ENCODE measurements at regions of chr15 and their contacts with region 1.

Region 1: GRCh38 chr15:32888221-32888761 is 170.5 kb downstream of the GREM1 start:
- DNase-seq: peak; percentile 95
- H3K4me3 ChIP-seq: no peak overlapping the region
- H3K27me3 ChIP-seq: no peaks in the 10 kb centered on the region
- CTCF ChIP-seq: no peak

Region 2: GRCh38 chr15:32743411-32744140 is 144.7 kb before region 1 on chr15:
- CTCF ChIA-PET with region 1: no interaction called
- POLR2A ChIA-PET with region 1: no interaction called
- DNase-seq: no peak
- H3K4me3 ChIP-seq: no peak overlapping the region
- H3K27me3 ChIP-seq: no peaks in the 10 kb centered on the region
- CTCF ChIP-seq: no peak

Region 3: GRCh38 chr15:32802286-32802936 is 85.9 kb before region 1 on chr15:
- CTCF ChIA-PET with region 1: no interaction called
- POLR2A ChIA-PET with region 1: no interaction called
- DNase-seq: peak; percentile 61
- H3K4me3 ChIP-seq: no peak overlapping the region
- H3K27me3 ChIP-seq: no peaks in the 10 kb centered on the region
- CTCF ChIP-seq: no peak

Region 4: DNA sequence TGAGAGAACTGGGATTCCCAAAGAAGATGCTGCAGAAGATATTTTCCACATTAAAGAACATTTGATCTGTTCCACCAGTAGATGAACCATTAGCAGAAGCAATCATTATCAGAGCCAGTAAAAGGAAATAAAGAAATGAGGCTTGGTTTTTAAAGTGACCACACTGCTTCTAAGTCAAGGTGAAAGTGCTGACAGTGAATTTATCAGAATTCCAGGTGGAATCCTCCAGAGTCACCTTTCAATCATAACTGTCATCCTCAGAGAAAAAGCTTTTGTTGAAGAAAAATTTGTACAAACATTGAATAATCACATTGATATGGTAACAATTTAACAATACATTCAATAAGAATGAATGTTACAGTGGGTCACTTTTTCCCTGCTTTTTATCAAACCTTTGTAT is 70.7 kb before region 1 on chr15:
- CTCF ChIA-PET with region 1: no interaction called
- POLR2A ChIA-PET with region 1: no interaction called
- DNase-seq: no peak
- H3K4me3 ChIP-seq: no peak overlapping the region
- H3K27me3 ChIP-seq: no peaks in the 10 kb centered on the region
- CTCF ChIP-seq: no peak

Region 5: DNA sequence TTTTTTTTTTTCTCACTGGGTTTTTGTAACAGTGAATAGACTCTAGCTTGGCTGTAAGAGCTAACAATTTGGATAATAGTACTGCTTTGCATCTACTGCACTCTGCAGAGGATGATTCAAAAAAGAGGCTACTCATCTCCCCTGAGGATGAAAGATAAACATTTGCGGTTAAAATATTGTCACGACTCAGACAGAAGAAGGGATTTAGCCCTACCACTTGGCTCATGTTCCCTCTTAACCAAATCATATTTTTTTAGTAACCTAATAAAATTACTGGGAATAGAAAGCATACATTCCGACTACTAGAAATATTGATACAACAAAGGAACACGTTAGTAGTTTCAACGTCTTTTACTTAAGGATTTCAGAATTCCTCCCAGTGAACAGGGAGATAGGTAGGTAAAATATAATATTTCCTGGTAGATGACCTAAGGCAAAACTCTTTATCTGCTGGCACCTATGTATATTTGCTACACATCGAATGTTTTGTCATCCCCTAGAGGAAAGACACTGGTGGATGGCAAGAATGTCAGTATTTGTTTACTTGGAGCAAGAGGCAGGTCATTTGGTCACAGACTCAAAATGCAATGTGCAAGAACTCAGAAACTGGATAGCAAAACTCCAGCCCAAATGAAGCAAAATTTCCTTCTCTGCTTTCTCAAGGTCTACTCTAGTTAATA is 59.6 kb before region 1 on chr15:
- CTCF ChIA-PET with region 1: no interaction called
- POLR2A ChIA-PET with region 1: interaction called, 21 read pairs
- DNase-seq: peak; percentile 80
- H3K4me3 ChIP-seq: no peak overlapping the region
- H3K27me3 ChIP-seq: no peaks in the 10 kb centered on the region
- CTCF ChIP-seq: no peak

Region 6: DNA sequence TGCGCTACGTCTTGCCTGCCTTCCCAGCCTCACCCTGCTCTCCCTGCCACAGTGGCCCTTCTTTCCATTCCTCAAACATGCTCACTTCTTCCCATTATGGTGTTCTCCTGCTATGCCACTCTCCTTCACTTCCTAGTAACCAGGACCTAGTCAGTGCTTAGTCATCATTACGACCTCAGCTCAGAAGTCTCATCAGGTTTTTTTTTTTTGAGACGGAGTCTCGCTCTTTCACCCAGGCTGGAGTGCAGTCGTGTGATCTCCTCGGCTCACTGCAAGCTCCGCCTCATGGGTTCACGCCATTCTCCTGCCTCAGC is 21.0 kb before region 1 on chr15:
- CTCF ChIA-PET with region 1: interaction called, 3 read pairs
- POLR2A ChIA-PET with region 1: interaction called, 21 read pairs
- DNase-seq: no peak
- H3K4me3 ChIP-seq: no peak overlapping the region
- H3K27me3 ChIP-seq: no peaks in the 10 kb centered on the region
- CTCF ChIP-seq: no peak